Left ventricle myocardium inferior (tissue), 1 donor: ENCODE measurements at regions of chr5 and their contacts with region 1.

Region 1: DNA sequence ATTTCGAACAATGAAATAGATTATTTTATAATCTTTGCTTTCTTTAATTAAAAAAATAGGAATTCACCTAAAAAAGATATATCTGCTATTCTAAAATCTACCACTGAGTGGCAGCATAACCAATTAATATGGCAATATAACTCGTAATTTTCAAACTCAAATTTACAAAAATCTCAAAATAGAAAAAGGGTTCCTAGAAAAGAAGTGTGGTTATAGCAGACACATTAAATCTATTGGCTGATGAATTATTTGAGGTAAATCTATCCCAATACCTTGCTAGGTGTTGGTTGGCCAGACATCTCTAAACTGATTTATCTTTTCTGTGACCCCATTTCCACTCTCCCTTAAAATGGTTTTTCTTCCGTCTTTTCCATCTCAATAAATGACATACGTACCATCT is 30.2 kb upstream of the NRG2 start:
- DNase-seq: no peak
- H3K4me3 ChIP-seq: no peak overlapping the region
- H3K27ac ChIP-seq: no peak overlapping the region
- H3K4me1 ChIP-seq: no peaks in the 10 kb centered on the region
- H3K27me3 ChIP-seq: no peaks in the 10 kb centered on the region
- CTCF ChIP-seq: peak; percentile 78

Region 2: GRCh38 chr5:140141241-140141640 is 67.9 kb after region 1 on chr5:
- intact Hi-C with region 1: loop called (anchors 5 kb)
- DNase-seq: no peak
- H3K4me3 ChIP-seq: no peak overlapping the region
- H3K27ac ChIP-seq: peak overlapping the region; percentile 22
- H3K4me1 ChIP-seq: peaks cover 45% of the 10 kb centered on the region
- H3K27me3 ChIP-seq: no peaks in the 10 kb centered on the region
- CTCF ChIP-seq: no peak

Region 3: GRCh38 chr5:140157032-140157803 is 83.9 kb after region 1 on chr5:
- intact Hi-C with region 1: loop called (anchors 2 kb)
- DNase-seq: peak; percentile 90
- H3K4me3 ChIP-seq: peak overlapping the region; percentile 63
- H3K27ac ChIP-seq: peak overlapping the region; percentile 62
- H3K4me1 ChIP-seq: peaks cover 28% of the 10 kb centered on the region
- H3K27me3 ChIP-seq: no peaks in the 10 kb centered on the region
- CTCF ChIP-seq: peak; percentile 90